ENCODE measurements at regions of chr5 and their contacts with region 1.

Region 1: DNA sequence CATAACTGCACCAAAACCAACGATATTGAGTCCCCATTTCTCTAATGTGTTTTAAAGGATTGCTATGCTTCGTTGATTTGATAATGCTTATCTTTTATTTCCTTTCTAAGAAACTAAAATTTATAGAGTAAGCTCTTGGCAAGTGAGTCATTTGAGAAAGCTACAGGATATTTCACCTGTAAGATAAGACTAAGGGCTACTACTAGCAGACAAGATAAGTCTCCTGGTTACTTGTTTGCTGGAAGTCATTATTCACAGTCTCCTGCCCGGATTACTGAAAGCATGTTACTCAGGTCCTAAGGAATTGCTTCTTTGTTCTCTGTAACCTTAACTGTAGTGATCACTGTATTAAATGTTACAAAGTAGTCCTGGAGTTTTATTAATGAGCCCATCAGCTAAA is 315.9 kb upstream of the RASA1 start:
- DNase-seq: no peak
- H3K4me3 ChIP-seq: no peak overlapping the region
- H3K27ac ChIP-seq: no peak overlapping the region
- H3K4me1 ChIP-seq: no peaks in the 10 kb centered on the region
- CTCF ChIP-seq: no peak

Region 2: GRCh38 chr5:86929123-86929766 is 22.5 kb before region 1 on chr5:
- CTCF ChIA-PET with region 1: no interaction called
- POLR2A ChIA-PET with region 1: no interaction called
- intact Hi-C with region 1: no loop called
- DNase-seq: no peak
- H3K4me3 ChIP-seq: no peak overlapping the region
- H3K27ac ChIP-seq: no peak overlapping the region
- H3K4me1 ChIP-seq: no peaks in the 10 kb centered on the region
- CTCF ChIP-seq: no peak

Region 3: DNA sequence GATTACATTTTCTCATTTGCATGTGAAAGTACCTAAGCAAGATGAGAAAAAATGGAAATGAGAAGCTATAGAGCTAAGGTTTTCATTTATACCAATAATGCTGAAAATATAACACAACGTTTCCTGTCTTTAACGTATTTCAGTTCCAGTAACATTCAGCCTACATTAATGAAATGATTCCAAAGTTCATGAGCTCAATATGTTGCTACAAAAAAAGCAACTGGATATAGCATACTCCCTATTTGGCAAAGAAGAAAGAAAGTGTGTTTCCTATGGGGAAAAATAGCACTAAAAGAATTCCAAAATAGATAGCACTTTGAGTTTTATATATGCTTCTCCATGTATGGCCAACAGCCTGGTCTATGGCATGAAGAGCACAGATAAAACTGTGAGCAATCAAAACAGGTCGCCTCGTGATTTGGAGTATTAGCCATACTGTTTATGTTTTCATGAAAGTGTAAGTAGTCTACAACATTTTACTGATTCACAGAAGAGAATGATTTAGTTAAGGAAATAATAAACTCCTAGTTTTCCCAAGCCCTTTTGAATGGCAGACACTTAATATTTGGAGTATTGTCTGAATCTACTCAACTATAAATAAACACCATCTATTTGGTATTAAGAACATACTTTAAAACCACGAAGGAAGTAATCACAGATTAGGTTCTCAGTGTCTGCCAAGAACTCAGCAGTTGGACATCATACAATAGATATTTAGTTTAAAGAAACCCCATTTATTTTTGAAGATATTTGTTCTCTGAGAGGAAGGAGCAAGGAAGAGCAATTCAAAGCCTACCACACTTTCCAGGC is 57.2 kb after region 1 on chr5:
- CTCF ChIA-PET with region 1: no interaction called
- POLR2A ChIA-PET with region 1: no interaction called
- intact Hi-C with region 1: loop called (anchors 10 kb)
- DNase-seq: no peak
- H3K4me3 ChIP-seq: no peak overlapping the region
- H3K27ac ChIP-seq: no peak overlapping the region
- H3K4me1 ChIP-seq: no peaks in the 10 kb centered on the region
- CTCF ChIP-seq: no peak

Region 4: DNA sequence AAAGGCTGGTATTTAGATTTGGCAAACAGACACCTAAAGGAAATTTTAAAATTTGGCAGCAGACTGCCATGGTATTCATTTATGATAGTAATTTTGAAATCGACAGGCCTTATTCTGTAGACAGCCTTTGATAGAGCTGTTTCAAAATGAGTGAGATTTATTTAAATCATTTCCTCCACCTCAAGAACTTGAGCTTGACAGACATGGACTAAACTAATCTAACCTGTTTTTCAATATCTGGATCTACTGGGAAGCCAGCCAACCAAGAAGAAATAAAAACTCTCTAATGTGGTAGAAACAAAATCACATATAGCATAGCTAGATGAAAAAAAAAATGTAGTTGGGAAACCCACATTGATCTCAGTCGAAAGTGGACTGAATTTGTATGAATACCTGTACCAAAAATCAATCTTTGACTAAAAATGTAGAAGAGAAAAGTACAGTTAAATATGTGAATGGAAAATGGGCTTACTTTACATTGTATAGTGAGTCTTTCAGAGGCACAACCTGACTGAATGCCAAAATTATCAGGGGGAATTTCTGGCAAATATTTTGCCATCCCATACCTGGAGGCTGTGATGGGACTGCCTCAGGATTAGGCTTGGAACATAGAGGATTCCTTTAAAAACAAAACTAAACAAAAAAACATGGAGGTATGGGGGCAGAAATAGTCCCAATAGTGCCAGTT is 259.1 kb after region 1 on chr5:
- CTCF ChIA-PET with region 1: no interaction called
- POLR2A ChIA-PET with region 1: no interaction called
- intact Hi-C with region 1: no loop called
- DNase-seq: no peak
- H3K4me3 ChIP-seq: no peak overlapping the region
- H3K27ac ChIP-seq: no peak overlapping the region
- H3K4me1 ChIP-seq: no peaks in the 10 kb centered on the region
- CTCF ChIP-seq: no peak

Measured in OCI-LY7 (cell line).